IMR-90 (cell line): ENCODE measurements at regions of chr6 and their contacts with region 1.

Region 1: DNA sequence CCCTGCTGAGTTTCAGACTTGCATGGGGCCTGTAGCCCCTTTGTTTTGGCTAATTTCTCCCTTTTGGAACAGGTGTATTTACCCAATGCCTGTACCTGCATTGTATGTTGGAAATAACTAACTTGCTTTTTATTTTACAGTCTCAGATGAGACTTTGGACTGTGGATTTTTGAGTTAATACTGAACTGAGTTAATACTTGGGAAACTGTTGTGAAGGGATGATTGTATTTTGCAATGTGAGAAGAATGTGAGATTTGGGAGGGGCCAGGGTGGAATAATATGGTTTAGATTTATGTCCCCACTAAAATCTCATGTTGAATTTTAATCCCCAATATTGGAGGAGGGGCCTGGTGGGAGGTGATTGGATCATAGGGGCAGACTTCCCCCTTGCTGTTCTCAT is 99.1 kb upstream of the IRAK1BP1 start:
- DNase-seq: no peak
- ATAC-seq: no peak
- H3K4me3 ChIP-seq: no peak overlapping the region
- H3K27ac ChIP-seq: no peak overlapping the region
- H3K4me1 ChIP-seq: no peaks in the 10 kb centered on the region
- H3K27me3 ChIP-seq: no peaks in the 10 kb centered on the region
- CTCF ChIP-seq: no peak
- POLR2A ChIP-seq: no peak
- RAD21 ChIP-seq: no peak

Region 2: DNA sequence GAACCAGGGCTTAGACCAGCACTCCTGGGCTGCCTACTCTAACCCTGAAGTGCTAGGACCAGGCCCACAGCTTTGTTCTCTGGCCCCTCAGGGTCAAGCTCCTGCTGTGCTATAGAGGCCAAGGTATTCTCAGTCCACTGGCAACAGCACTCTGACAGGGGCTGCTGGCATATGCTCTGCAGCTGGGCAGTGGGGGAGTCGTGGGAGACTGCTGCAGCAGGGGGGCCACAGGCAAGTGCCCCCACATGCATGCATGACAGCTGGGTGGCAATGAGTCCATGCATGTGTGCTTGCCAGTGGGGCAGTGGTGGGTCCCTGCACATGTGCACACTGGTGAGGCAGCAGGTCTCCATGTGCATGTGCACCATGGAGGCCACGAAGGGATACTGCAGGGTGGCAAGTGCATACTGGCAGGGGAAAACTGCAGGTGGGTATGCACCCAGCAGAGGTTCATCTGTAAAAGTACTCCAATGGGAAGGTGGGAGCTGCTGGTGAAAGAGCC is 265.8 kb before region 1 on chr6:
- CTCF ChIA-PET with region 1: no interaction called
- POLR2A ChIA-PET with region 1: no interaction called
- dilution Hi-C with region 1: no loop called
- in situ Hi-C with region 1: no loop called
- intact Hi-C with region 1: loop called (anchors 1 kb)
- DNase-seq: no peak
- ATAC-seq: no peak
- H3K4me3 ChIP-seq: no peak overlapping the region
- H3K27ac ChIP-seq: no peak overlapping the region
- H3K4me1 ChIP-seq: no peaks in the 10 kb centered on the region; the same call in 1 of the 2 replicates
- H3K27me3 ChIP-seq: no peaks in the 10 kb centered on the region
- CTCF ChIP-seq: no peak
- POLR2A ChIP-seq: no peak
- RAD21 ChIP-seq: no peak